CD14-positive monocyte (primary cell): ENCODE measurements at regions of chr18 and their contacts with region 1.

Region 1: DNA sequence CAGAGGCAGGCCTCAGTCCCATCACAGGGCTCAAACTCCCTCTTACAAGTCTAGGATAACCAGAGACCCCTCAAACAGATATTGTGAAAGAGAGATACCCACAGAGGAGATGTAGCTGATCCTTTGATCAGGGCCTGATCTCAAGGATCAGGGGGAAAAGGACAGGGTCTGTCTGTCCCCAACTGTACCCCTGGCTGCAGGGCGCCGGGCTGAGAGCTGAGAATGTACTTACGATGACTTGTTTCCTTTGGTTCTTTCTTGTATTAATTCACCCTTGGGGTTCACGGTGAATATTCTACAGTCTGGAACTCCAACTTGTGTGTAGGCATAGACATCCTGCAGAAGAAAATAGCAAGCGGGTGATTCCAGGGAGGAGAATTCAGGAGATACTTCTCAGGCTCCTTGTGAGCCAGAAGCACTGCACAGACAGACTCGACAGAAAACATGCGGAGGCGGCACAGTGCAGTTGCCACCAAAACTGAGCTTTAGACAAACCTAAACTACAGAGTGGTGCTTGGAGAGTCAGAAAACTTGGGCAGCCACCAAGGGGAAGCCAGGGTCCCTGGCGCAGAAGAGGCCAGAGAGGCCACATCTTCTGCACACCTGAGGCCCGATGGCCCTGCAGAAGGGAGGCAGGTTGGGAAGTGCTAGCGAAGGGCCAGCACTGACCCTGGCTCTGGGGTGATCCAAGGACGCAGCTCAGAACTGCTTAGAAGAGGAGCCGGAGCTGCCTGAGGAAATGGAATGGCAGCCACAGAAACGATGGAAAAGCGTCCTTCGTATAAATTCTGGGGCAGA is 73.9 kb downstream of the EMILIN2 start:
- DNase-seq: no peak
- H3K4me3 ChIP-seq: no peak overlapping the region
- H3K4me3 Mint-ChIP-seq: no peak overlapping the region
- H3K27ac ChIP-seq: peak overlapping the region in 1 of 2 donors; percentile 60
- H3K27ac Mint-ChIP-seq: peak overlapping the region in 4 of 7 donors; percentile 37 to 70 (median 61)
- H3K4me1 ChIP-seq: no peaks in the 10 kb centered on the region
- H3K4me1 Mint-ChIP-seq: peaks cover 14% of the 10 kb centered on the region
- H3K27me3 ChIP-seq: no peaks in the 10 kb centered on the region
- H3K27me3 Mint-ChIP-seq: no peaks in the 10 kb centered on the region
- CTCF ChIP-seq: no peak

Region 2: GRCh38 chr18:3135536-3135935 is 214.8 kb after region 1 on chr18:
- intact Hi-C with region 1: loop called in 1 of 2 experiments (anchors 10 kb)
- DNase-seq: no peak
- H3K4me3 ChIP-seq: no peak overlapping the region
- H3K4me3 Mint-ChIP-seq: no peak overlapping the region
- H3K27ac ChIP-seq: no peak overlapping the region
- H3K27ac Mint-ChIP-seq: no peak overlapping the region
- H3K4me1 ChIP-seq: no peaks in the 10 kb centered on the region
- H3K4me1 Mint-ChIP-seq: no peaks in the 10 kb centered on the region
- H3K27me3 ChIP-seq: no peaks in the 10 kb centered on the region
- H3K27me3 Mint-ChIP-seq: peaks cover 0 to 2% (median 0%) of the 10 kb centered on the region in 3 donors
- CTCF ChIP-seq: no peak